Dorsolateral prefrontal cortex (tissue), 120 donors: ENCODE measurements at regions of chr21 and their contacts with region 1.

Region 1: DNA sequence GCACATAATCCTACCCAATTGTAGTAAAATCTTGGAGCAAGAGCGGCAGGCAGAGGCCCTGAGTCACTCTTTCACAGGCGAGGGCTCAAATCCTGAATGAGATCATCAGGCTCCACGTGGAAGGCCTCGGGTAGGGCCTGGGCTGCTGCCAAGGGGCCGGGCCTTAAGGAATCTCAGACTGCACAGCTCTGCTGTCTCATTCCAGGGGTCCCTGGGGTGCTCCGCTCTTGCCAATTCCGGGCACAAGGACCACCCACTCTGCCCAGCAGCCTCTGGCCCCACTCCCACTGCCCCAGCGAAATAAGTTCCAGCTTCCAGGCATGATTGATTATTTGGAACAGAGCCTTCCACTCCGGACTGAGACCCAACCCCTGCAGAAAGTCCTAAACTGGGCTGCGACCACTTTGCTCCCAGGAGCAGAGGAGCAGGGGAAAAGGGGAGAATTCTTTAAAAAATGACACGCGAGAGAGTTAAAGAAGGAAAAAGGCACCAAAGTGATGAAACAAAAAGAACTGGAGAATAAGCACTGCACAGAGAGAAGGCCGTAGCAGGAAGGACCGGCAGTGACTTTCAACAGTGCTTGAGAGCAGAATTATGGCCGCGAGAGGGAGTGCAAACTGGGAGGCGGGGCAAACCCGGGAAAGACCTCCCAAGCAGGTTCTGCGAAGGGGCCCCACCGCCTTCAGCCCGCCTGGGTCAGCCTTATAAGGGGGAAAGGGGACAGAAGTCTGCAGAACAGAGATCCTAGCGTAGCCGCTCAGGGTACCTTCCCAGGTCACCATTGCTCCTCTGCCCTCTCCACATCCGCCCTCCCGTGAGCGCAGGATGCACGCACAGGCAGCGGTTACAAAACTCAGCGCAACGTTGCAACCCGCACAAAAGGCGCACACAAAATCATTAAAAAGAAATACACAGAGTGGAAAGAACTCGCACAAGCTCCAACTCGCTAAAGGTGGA is 2.0 kb downstream of the ADAMTS1 start:
- DNase-seq: peak; percentile 76 to 95 (median 89)
- H3K4me3 ChIP-seq: peak overlapping the region; percentile 63 to 94 (median 84)
- H3K27ac ChIP-seq: peak overlapping the region in 58 of 59 donors; percentile 45 to 100 (median 99)
- H3K27me3 ChIP-seq: no peaks in the 10 kb centered on the region
- CTCF ChIP-seq: peak in 42 of 56 donors; percentile 6 to 57 (median 35)

Region 2: DNA sequence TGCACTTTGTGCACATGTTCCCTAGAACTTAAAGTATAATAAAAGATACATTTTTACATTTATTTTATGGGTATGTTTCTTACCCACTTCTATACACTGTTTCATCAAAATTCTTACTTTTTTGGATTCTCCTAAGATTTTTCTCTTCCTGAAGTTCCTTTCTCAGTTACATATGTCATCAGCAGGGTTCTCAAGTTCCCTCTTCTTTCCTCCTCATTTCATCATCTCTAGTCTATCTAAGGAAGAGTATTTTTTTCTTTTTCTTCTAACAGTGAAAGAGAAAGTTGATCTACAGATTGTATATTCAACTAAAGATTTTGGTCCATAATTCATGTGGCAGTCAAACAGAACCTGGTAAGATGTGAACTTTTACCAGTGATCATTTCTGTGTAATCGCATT is 229.0 kb before region 1 on chr21:
- intact Hi-C with region 1: no loop called
- DNase-seq: no peak
- H3K4me3 ChIP-seq: no peak overlapping the region
- H3K27ac ChIP-seq: no peak overlapping the region
- H3K27me3 ChIP-seq: no peaks in the 10 kb centered on the region
- CTCF ChIP-seq: no peak

Region 3: GRCh38 chr21:26769613-26770188 is 73.6 kb before region 1 on chr21:
- intact Hi-C with region 1: loop called (anchors 2 to 5 kb)
- DNase-seq: no peak
- H3K4me3 ChIP-seq: peak overlapping the region in 4 of 59 donors; percentile 0 to 14 (median 10)
- H3K27ac ChIP-seq: peak overlapping the region in 11 of 59 donors; percentile 6 to 74 (median 50)
- H3K27me3 ChIP-seq: no peaks in the 10 kb centered on the region
- CTCF ChIP-seq: peak; percentile 65 to 92 (median 80)

Region 4: GRCh38 chr21:26783466-26784195 is 59.6 kb before region 1 on chr21:
- intact Hi-C with region 1: loop called in 1 of 2 experiments (anchors 5 kb)
- DNase-seq: no peak
- H3K4me3 ChIP-seq: no peak overlapping the region
- H3K27ac ChIP-seq: peak overlapping the region in 44 of 59 donors; percentile 3 to 86 (median 62)
- H3K27me3 ChIP-seq: no peaks in the 10 kb centered on the region
- CTCF ChIP-seq: no peak

Region 5: GRCh38 chr21:26795866-26796329 is 47.4 kb before region 1 on chr21:
- intact Hi-C with region 1: loop called in 1 of 2 experiments (anchors 2 kb)
- DNase-seq: peak; percentile 9 to 81 (median 66)
- H3K4me3 ChIP-seq: peak overlapping the region in 27 of 59 donors; percentile 1 to 52 (median 17)
- H3K27ac ChIP-seq: peak overlapping the region in 57 of 59 donors; percentile 25 to 92 (median 80)
- H3K27me3 ChIP-seq: no peaks in the 10 kb centered on the region
- CTCF ChIP-seq: peak in 6 of 56 donors; percentile 10 to 29 (median 24)

Region 6: DNA sequence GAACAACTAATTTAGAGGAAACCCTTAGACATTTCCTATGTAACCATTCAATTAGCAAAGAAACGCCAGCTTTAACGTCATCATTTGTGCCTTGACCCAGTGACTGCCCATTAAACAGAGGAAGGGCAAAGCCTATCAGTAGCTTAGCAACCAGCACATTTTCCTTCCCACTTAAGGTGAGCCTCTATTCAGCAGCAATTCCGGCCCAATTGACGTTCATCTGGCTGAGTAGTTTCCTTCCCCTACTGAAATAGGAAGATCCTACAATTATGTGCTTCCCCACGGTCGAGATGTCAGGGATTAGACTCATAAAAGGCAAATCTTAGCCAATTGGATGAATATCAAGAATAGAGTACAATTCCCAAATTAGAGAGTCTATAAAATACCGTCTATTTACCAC is 605.7 kb after region 1 on chr21:
- intact Hi-C with region 1: no loop called
- DNase-seq: no peak
- H3K4me3 ChIP-seq: no peak overlapping the region
- H3K27ac ChIP-seq: no peak overlapping the region
- H3K27me3 ChIP-seq: peaks cover 0 to 3% (median 0%) of the 10 kb centered on the region in 45 donors
- CTCF ChIP-seq: no peak

Region 7: GRCh38 chr21:27813750-27814149 is 970.5 kb after region 1 on chr21:
- intact Hi-C with region 1: loop called in 1 of 2 experiments (anchors 10 kb)
- DNase-seq: peak; percentile 4 to 93 (median 86)
- H3K4me3 ChIP-seq: peak overlapping the region in 13 of 59 donors; percentile 4 to 43 (median 21)
- H3K27ac ChIP-seq: peak overlapping the region; percentile 23 to 97 (median 88)
- H3K27me3 ChIP-seq: no peaks in the 10 kb centered on the region
- CTCF ChIP-seq: peak in 11 of 56 donors; percentile 7 to 46 (median 25)